OCI-LY7 (cell line): ENCODE measurements at regions of chr1 and their contacts with region 1.

Region 1: GRCh38 chr1:200379431-200379755 is 30.4 kb downstream of the ZNF281 start:
- DNase-seq: no peak
- H3K4me3 ChIP-seq: peak overlapping the region; percentile 53
- H3K27ac ChIP-seq: peak overlapping the region; percentile 83
- H3K4me1 ChIP-seq: peaks cover 76% of the 10 kb centered on the region
- CTCF ChIP-seq: no peak

Region 2: DNA sequence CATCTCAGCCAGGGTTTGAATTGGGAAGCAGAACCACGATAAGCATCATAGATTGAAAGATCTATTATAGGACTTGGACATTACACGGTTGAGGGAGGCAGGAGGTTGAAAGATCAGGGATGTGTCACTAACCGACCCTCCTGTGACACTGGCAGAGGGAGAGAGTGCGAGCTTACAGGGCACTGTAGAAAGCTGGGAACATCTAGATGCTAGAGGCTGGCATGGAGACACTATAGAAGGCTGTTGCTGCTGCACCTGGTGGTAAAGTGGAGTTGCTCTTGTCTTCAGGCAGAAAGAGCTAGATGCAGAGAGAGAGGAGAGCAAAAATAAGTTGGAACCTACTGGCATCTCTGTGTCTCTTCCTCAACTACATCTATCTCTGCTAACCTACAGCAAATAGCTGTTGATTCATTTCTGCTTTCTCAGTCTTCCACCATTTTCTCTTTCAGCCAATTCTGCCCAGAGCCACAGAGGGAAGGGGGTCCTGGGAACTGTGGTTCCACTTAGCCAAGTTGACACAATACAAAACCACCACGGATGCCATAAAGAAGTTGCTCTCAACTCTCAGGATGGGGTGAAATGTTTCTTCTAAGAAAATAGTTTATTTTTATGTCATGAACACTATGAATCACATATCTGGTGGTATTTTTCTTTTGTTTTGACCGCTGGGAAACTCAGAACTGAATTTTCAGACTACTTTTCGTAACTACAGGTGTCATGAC is 125.5 kb before region 1 on chr1:
- CTCF ChIA-PET with region 1: no interaction called
- POLR2A ChIA-PET with region 1: no interaction called
- intact Hi-C with region 1: no loop called
- DNase-seq: peak; percentile 7
- H3K4me3 ChIP-seq: no peak overlapping the region
- H3K27ac ChIP-seq: no peak overlapping the region
- H3K4me1 ChIP-seq: no peaks in the 10 kb centered on the region
- CTCF ChIP-seq: 0 out of 2 replicates have a peak, but pooled peaks have one; percentile 22

Region 3: GRCh38 chr1:200409761-200410565 is 30.6 kb after region 1 on chr1 and contains the start of gene ZNF281:
- CTCF ChIA-PET with region 1: no interaction called
- POLR2A ChIA-PET with region 1: interaction called, 5 read pairs
- intact Hi-C with region 1: loop called (anchors 2 kb)
- DNase-seq: peak; percentile 96
- H3K4me3 ChIP-seq: peak within 1 kb of the TSS; percentile 97
- H3K27ac ChIP-seq: peak within 1 kb of the TSS; percentile 79
- H3K4me1 ChIP-seq: peaks cover 50% of the 10 kb centered on the region
- CTCF ChIP-seq: no peak
- total RNA-seq, gene ZNF281: 22.9 and 24.2 TPM in 2 replicates